ENCODE measurements at regions of chr20 and their contacts with region 1.

Region 1: DNA sequence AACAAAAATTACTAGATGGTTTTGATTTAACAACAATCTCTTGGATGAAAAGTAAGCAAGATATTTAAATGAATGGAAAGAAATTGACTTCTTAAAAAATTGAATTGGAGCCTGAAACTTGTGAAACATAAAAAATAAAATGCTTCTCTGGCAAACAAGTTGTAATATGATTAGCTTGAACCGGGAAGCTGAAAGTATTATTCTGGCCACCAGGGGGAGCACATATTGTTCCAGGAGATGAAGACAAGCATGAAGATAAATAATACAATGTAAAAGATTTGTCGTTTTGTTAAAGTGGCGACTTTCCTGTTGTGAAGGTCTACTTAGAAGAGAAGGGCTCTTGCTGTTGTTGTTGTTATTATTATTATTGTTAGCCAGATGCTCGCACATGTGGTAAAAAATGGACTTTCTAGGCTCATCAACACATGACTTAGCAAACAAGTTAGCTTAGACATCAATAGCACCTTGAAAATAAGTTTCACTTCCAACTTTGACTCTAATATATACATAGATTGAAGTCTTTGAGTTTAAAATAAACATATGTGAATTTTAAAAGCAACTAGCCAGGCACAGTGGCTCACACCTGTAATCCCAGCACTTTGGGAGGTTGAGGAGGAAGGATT is 14.2 kb downstream of the PAX1 start:
- DNase-seq: no peak
- ATAC-seq: no peak
- H3K4me3 ChIP-seq: no peak overlapping the region
- H3K27ac ChIP-seq: no peak overlapping the region
- H3K4me1 ChIP-seq: no peaks in the 10 kb centered on the region
- H3K27me3 ChIP-seq: peaks cover 0 to 2% of the 10 kb centered on the region in 2 donors

Region 2: GRCh38 chr20:22303523-22303922 is 583.8 kb after region 1 on chr20:
- intact Hi-C with region 1: loop called in 1 of 2 experiments (anchors 10 kb)
- DNase-seq: no peak
- ATAC-seq: no peak
- H3K4me3 ChIP-seq: no peak overlapping the region
- H3K27ac ChIP-seq: no peak overlapping the region
- H3K4me1 ChIP-seq: no peaks in the 10 kb centered on the region
- H3K27me3 ChIP-seq: no peaks in the 10 kb centered on the region

Measured in aorta (tissue), 5 donors.